ENCODE measurements at regions of chr6 and their contacts with region 1.

Region 1: GRCh38 chr6:29414588-29414987 is at the start of gene OR12D1:
- DNase-seq: no peak
- ATAC-seq: no peak
- H3K4me3 ChIP-seq: no peak within 1 kb of the TSS
- H3K27ac ChIP-seq: no peak within 1 kb of the TSS
- H3K4me1 ChIP-seq: no peaks in the 10 kb centered on the region
- H3K27me3 ChIP-seq: peaks cover 0 to 6% of the 10 kb centered on the region in 2 experiments; a peak in 2 of 5 replicates
- CTCF ChIP-seq: peak in 1 of 3 experiments; percentile 39; a peak in 2 of 6 replicates
- EP300 ChIP-seq: no peak
- POLR2A ChIP-seq: no peak
- RAD21 ChIP-seq: peak in 1 of 2 experiments; percentile 21; a peak in 1 of 4 replicates
- polyA plus RNA-seq, gene OR12D1: not detected

Region 2: GRCh38 chr6:30319146-30319835 is 904.7 kb after region 1 on chr6:
- CTCF ChIA-PET with region 1: no interaction called
- POLR2A ChIA-PET with region 1: no interaction called
- in situ Hi-C with region 1: no loop called
- intact Hi-C with region 1: loop called (anchors 5 kb)
- DNase-seq: no peak
- ATAC-seq: no peak
- H3K4me3 ChIP-seq: no peak overlapping the region
- H3K27ac ChIP-seq: no peak overlapping the region
- H3K4me1 ChIP-seq: peaks cover 7 to 26% of the 10 kb centered on the region in 2 experiments
- H3K27me3 ChIP-seq: no peaks in the 10 kb centered on the region
- CTCF ChIP-seq: no peak
- EP300 ChIP-seq: no peak
- POLR2A ChIP-seq: no peak
- RAD21 ChIP-seq: no peak

Measured in K562 (cell line).